Activated CD4-positive, alpha-beta memory T cell treated with anti-CD3 and anti-CD28 coated beads for 36 hours (primary cell): ENCODE measurements at regions of chr7 and their contacts with region 1.

Region 1: GRCh38 chr7:123635551-123636359 is 19.9 kb upstream of the LMOD2 start:
- DNase-seq: no peak
- H3K4me3 Mint-ChIP-seq: no peak overlapping the region
- H3K27ac Mint-ChIP-seq: no peak overlapping the region
- H3K4me1 Mint-ChIP-seq: no peaks in the 10 kb centered on the region
- H3K27me3 Mint-ChIP-seq: peaks cover 17% of the 10 kb centered on the region

Region 2: GRCh38 chr7:123608991-123609882 is 26.5 kb before region 1 on chr7:
- CTCF ChIA-PET with region 1: no interaction called
- POLR2A ChIA-PET with region 1: no interaction called
- intact Hi-C with region 1: no loop called
- DNase-seq: no peak
- H3K4me3 Mint-ChIP-seq: no peak overlapping the region
- H3K27ac Mint-ChIP-seq: no peak overlapping the region
- H3K4me1 Mint-ChIP-seq: no peaks in the 10 kb centered on the region
- H3K27me3 Mint-ChIP-seq: peaks cover 6% of the 10 kb centered on the region

Region 3: GRCh38 chr7:123624527-123625183 is 11.1 kb before region 1 on chr7:
- CTCF ChIA-PET with region 1: interaction called, 13 read pairs
- POLR2A ChIA-PET with region 1: no interaction called
- intact Hi-C with region 1: no loop called
- DNase-seq: peak; percentile 80
- H3K4me3 Mint-ChIP-seq: no peak overlapping the region
- H3K27ac Mint-ChIP-seq: no peak overlapping the region
- H3K4me1 Mint-ChIP-seq: no peaks in the 10 kb centered on the region
- H3K27me3 Mint-ChIP-seq: no peaks in the 10 kb centered on the region

Region 4: DNA sequence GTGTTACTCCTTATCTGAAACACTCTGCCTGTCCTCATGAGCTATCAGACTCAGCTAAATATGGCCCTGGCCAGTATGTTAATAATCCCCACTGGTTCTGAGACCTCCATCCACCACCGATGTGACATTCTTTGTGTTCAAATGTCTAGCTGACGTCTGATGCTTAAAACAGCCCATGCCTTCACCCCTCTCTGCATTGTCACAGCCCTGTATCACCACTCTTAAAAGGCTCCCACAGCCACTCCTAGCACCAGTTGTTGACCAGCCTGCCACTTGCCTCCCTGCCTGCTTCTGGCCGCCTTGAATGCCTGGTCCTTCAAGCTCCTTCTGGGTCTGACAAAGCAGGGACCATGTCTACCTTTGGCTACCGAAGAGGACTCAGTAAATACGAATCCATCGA is 19.9 kb after region 1 on chr7 and contains the start of gene LMOD2:
- CTCF ChIA-PET with region 1: no interaction called
- POLR2A ChIA-PET with region 1: no interaction called
- intact Hi-C with region 1: no loop called
- DNase-seq: no peak
- H3K4me3 Mint-ChIP-seq: no peak within 1 kb of the TSS
- H3K27ac Mint-ChIP-seq: no peak within 1 kb of the TSS
- H3K4me1 Mint-ChIP-seq: no peaks in the 10 kb centered on the region
- H3K27me3 Mint-ChIP-seq: peaks cover 5% of the 10 kb centered on the region
- total RNA-seq, gene LMOD2: not detected

Region 5: GRCh38 chr7:123666492-123666891 is 30.7 kb after region 1 on chr7:
- CTCF ChIA-PET with region 1: no interaction called
- POLR2A ChIA-PET with region 1: no interaction called
- intact Hi-C with region 1: no loop called
- DNase-seq: no peak
- H3K4me3 Mint-ChIP-seq: no peak overlapping the region
- H3K27ac Mint-ChIP-seq: no peak overlapping the region
- H3K4me1 Mint-ChIP-seq: no peaks in the 10 kb centered on the region
- H3K27me3 Mint-ChIP-seq: peaks cover 12% of the 10 kb centered on the region

Region 6: DNA sequence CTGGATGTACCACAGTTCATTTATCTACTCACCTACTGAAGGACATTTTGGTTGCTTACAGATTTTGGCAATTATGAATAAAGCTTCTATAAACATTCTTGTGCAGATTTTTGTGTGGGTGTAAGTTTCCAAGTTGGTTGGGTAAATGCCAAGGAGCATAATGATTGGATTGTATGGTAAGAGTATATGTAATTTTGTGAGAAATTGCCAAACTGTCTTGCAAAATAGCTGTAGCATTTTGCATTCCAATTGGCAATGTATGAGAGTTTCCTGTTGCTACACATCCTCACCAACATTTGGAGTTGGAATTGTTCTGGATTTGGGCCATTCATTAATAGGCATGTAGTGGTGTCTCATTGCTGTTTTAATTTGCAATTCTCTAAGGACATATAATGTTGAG is 175.3 kb after region 1 on chr7:
- CTCF ChIA-PET with region 1: no interaction called
- POLR2A ChIA-PET with region 1: no interaction called
- intact Hi-C with region 1: no loop called
- DNase-seq: no peak
- H3K4me3 Mint-ChIP-seq: no peak overlapping the region
- H3K27ac Mint-ChIP-seq: no peak overlapping the region
- H3K4me1 Mint-ChIP-seq: no peaks in the 10 kb centered on the region
- H3K27me3 Mint-ChIP-seq: peaks cover 1% of the 10 kb centered on the region